ENCODE measurements at regions of chr17 and their contacts with region 1.

Region 1: GRCh38 chr17:45021607-45022287 is 29.7 kb downstream of the DCAKD start:
- DNase-seq: no peak
- H3K4me3 ChIP-seq: peak overlapping the region; percentile 47 to 56 (median 52)
- H3K27ac ChIP-seq: peak overlapping the region; percentile 82 to 89 (median 87)
- H3K4me1 ChIP-seq: peaks cover 35 to 52% (median 49%) of the 10 kb centered on the region in 4 donors
- H3K27me3 ChIP-seq: no peaks in the 10 kb centered on the region
- CTCF ChIP-seq: peak in 2 of 3 experiments; percentile 95 to 99
- EP300 ChIP-seq: no peak
- POLR2A ChIP-seq: no peak

Region 2: DNA sequence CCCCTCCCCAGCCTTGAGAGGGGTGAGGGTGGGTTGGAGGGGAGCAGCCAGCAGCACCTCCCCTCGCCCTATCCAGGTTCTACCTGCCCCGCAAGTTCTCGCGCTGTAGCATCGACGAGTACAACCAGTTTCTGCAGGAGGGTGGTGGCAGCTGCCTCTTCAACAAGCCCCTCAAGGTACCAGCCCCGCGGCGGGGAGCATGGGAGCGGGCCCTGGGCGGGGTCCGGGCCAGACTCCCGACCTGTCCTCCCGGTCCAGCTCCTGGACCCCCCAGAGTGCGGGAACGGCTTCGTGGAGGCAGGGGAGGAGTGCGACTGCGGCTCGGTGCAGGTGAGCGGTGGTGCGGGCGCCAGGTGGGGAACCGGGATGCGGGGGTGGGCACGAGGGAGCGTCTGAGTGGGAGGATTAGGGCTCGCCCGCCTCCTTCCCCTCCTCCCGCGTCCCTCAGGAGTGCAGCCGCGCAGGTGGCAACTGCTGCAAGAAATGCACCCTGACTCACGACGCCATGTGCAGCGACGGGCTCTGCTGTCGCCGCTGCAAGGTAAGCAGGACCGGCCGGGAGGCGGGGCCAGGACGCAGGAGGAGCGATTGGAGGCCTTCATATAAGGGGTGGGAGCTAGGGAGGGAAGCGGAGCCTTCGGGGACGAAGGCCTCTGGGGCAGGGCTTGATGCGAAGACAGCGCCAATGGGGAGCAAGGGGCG is 246.5 kb before region 1 on chr17:
- intact Hi-C with region 1: loop called (anchors 2 kb)
- DNase-seq: peak; percentile 98
- H3K4me3 ChIP-seq: peak overlapping the region; percentile 60 to 67 (median 63)
- H3K27ac ChIP-seq: peak overlapping the region; percentile 5 to 80 (median 70)
- H3K4me1 ChIP-seq: peaks cover 25 to 39% (median 36%) of the 10 kb centered on the region in 4 donors
- H3K27me3 ChIP-seq: peaks cover 0 to 35% (median 9%) of the 10 kb centered on the region in 4 donors
- CTCF ChIP-seq: peak in 1 of 3 experiments; percentile 21
- EP300 ChIP-seq: no peak
- POLR2A ChIP-seq: no peak

Region 3: DNA sequence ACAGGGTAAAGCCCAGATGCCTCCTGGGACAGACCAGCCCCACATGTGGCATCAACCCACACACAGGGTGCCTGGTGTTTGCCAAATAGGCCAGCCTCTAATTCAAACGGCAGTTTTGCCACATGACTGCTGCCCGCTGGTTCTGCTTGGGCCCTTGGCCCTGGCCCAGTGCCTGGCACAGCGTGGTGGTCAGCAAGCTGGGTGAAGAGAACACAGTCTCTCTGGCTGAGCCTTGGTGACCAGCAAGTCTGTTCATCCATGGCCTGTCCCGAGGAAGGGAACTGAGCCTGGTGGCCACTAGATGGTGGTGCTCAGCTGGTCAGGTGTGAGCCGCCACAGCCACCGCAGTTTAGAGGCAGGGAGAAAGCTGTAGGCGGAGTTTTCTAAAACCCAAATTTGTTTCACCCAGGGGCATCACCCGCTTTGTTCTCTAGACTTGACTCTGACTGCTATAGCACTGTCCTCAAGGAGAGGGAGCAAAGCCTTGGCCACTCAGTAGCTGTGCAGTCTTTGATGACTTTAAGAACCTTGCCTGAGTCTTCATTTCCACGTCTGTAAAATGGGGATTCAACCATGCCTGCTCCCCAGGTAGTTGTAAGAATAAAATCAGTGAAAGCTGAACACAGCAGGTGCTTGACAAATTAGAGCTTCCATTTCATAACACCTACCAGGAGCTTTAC is 101.7 kb before region 1 on chr17:
- intact Hi-C with region 1: loop called (anchors 2 kb)
- DNase-seq: no peak
- H3K4me3 ChIP-seq: no peak overlapping the region
- H3K27ac ChIP-seq: peak overlapping the region in 1 of 4 donors; percentile 5
- H3K4me1 ChIP-seq: peaks cover 25 to 36% (median 29%) of the 10 kb centered on the region in 4 donors
- H3K27me3 ChIP-seq: peaks cover 0 to 2% (median 0%) of the 10 kb centered on the region in 4 donors
- CTCF ChIP-seq: peak; percentile 81 to 94 (median 88)
- EP300 ChIP-seq: no peak
- POLR2A ChIP-seq: no peak

Region 4: GRCh38 chr17:45098869-45099616 is 77.3 kb after region 1 on chr17:
- intact Hi-C with region 1: loop called (anchors 5 kb)
- DNase-seq: peak; percentile 96
- H3K4me3 ChIP-seq: no peak overlapping the region
- H3K27ac ChIP-seq: peak overlapping the region; percentile 61 to 91 (median 76)
- H3K4me1 ChIP-seq: peaks cover 42 to 54% (median 48%) of the 10 kb centered on the region in 4 donors
- H3K27me3 ChIP-seq: no peaks in the 10 kb centered on the region
- CTCF ChIP-seq: peak; percentile 85 to 92 (median 90)
- EP300 ChIP-seq: no peak
- POLR2A ChIP-seq: no peak